PC-9 (cell line): ENCODE measurements at regions of chr9 and their contacts with region 1.

Region 1: GRCh38 chr9:117073539-117074341 is 341.1 kb downstream of the ASTN2 start:
- DNase-seq: peak in 1 of 2 experiments; percentile 25
- H3K4me3 ChIP-seq: no peak overlapping the region
- H3K27ac ChIP-seq: no peak overlapping the region
- H3K4me1 ChIP-seq: no peaks in the 10 kb centered on the region
- H3K27me3 ChIP-seq: peaks cover 25% of the 10 kb centered on the region
- CTCF ChIP-seq: peak; percentile 61

Region 2: DNA sequence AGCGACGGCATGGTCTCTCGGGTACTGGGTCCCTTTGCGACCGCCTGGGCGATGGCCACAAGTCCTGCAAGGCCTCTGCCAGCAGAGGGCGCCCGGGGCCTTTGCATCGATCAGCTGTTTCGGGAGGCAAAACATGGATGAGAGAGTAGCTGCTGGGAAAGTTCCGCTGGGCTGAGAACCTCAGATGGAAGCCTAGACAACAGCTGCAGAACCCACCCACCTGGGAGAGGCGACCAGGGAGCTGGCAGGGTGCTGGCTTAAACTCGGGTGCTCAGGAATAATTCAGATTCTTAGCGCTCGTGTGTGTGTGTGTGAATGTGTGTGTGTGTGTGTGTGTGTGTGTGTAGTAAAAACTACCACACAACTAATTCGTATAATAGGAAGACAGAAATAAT is 336.6 kb before region 1 on chr9:
- CTCF ChIA-PET with region 1: no interaction called
- POLR2A ChIA-PET with region 1: no interaction called
- intact Hi-C with region 1: loop called (anchors 2 kb)
- DNase-seq: peak; percentile 42 to 82
- H3K4me3 ChIP-seq: no peak overlapping the region
- H3K27ac ChIP-seq: no peak overlapping the region
- H3K4me1 ChIP-seq: no peaks in the 10 kb centered on the region
- H3K27me3 ChIP-seq: no peaks in the 10 kb centered on the region
- CTCF ChIP-seq: peak; percentile 96

Region 3: DNA sequence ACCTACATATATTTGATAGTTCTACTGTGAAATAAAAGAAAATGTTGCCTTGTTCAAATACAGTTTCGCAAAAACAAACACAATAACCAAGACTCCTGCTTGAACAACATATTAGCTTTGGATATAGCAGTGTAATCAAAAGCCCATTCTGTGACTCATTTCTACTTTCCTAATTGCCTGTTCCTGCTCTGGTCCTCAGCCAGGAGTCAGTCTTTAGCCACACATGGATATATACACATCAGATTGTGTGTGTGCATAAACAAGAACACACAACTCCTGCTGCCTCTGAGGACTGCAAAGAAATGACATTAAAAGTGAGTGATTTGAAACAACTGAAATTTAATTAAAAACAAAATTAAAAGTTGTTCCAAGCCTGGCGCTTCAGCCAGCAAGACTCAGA is 51.8 kb before region 1 on chr9:
- CTCF ChIA-PET with region 1: no interaction called
- POLR2A ChIA-PET with region 1: no interaction called
- intact Hi-C with region 1: no loop called
- DNase-seq: no peak
- H3K4me3 ChIP-seq: no peak overlapping the region
- H3K27ac ChIP-seq: no peak overlapping the region
- H3K4me1 ChIP-seq: no peaks in the 10 kb centered on the region
- H3K27me3 ChIP-seq: peaks cover 5% of the 10 kb centered on the region; the same call in 1 of the 2 replicates
- CTCF ChIP-seq: no peak

Region 4: DNA sequence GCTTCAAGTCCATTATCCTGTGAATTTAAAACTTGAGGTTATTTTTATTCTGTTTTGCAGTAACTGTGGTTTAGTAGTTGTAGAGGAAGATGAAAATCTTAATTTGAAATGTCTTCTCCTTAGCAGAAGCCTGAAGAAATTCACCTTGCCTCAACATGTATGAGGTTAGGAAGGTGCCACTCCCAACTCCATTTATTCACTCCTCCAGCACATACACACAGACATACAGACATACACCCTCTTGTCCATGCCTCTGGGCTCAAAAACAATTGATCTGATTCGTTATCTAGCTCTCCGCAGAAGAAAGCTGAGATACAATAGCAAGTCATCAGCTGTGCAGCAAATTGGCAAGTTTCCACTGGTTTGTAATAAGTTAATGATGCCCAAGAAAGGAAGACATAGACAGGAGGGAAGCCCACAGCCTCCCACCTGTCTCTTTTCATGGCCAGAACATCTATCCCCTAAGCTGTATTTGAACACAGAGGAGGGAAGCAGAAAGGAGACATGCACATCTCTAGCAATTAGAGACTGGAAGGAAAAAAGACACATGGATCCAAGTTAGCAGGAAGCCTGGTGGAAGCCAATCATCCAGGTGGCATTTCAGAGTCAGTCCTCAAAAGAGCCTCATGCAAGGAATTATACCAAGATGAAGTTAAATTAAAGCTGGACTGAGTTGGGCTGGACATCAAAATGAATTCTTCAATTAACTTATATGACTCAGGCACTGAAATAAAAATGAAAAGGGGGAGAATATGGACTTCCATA is 83.2 kb after region 1 on chr9:
- CTCF ChIA-PET with region 1: no interaction called
- POLR2A ChIA-PET with region 1: no interaction called
- intact Hi-C with region 1: loop called (anchors 5 kb)
- DNase-seq: no peak
- H3K4me3 ChIP-seq: no peak overlapping the region
- H3K27ac ChIP-seq: no peak overlapping the region
- H3K4me1 ChIP-seq: no peaks in the 10 kb centered on the region
- H3K27me3 ChIP-seq: no peaks in the 10 kb centered on the region
- CTCF ChIP-seq: no peak

Region 5: GRCh38 chr9:117487555-117488175 is 413.9 kb after region 1 on chr9:
- CTCF ChIA-PET with region 1: no interaction called
- POLR2A ChIA-PET with region 1: no interaction called
- intact Hi-C with region 1: loop called (anchors 5 kb)
- DNase-seq: peak in 1 of 2 experiments; percentile 55
- H3K4me3 ChIP-seq: no peak overlapping the region
- H3K27ac ChIP-seq: no peak overlapping the region
- H3K4me1 ChIP-seq: no peaks in the 10 kb centered on the region
- H3K27me3 ChIP-seq: 0 out of 2 replicates have a peak, but pooled peaks cover 4% of the 10 kb centered on the region
- CTCF ChIP-seq: peak; percentile 80